PC-3 (cell line): ENCODE measurements at regions of chr2 and their contacts with region 1.

Region 1: GRCh38 chr2:68441179-68441993 is 25.7 kb downstream of the FBXO48 start:
- DNase-seq: peak; percentile 91
- ATAC-seq: peak; percentile 96
- H3K4me3 ChIP-seq: no peak overlapping the region
- H3K27ac ChIP-seq: no peak overlapping the region
- H3K4me1 ChIP-seq: no peaks in the 10 kb centered on the region
- H3K27me3 ChIP-seq: no peaks in the 10 kb centered on the region
- CTCF ChIP-seq: peak; percentile 95

Region 2: DNA sequence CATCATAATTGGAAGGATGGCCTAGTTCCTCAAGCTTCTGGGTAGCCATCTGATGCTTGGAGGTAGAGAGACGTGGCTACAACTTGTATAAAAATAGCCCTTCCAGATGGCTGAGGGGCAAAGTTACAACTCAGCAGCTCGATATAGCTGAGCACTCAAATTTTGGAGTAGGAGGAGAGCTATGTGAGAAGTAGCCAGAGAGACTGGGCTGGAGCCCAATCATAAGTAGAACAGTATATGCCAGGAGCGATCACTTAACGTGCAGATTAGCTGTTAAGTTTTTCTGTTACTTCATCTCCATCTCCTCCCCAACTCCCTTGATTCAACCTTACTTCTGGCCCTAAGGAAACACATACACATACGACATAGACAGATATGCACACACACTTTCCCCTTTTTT is 150.5 kb before region 1 on chr2:
- CTCF ChIA-PET with region 1: interaction called, 6 read pairs
- POLR2A ChIA-PET with region 1: no interaction called
- intact Hi-C with region 1: loop called (anchors 5 kb)
- DNase-seq: no peak
- ATAC-seq: no peak
- H3K4me3 ChIP-seq: no peak overlapping the region
- H3K27ac ChIP-seq: no peak overlapping the region
- H3K4me1 ChIP-seq: no peaks in the 10 kb centered on the region; the same call in 1 of the 2 replicates
- H3K27me3 ChIP-seq: no peaks in the 10 kb centered on the region
- CTCF ChIP-seq: no peak

Region 3: GRCh38 chr2:68319398-68320117 is 121.8 kb before region 1 on chr2 and contains the start of gene CNRIP1:
- CTCF ChIA-PET with region 1: interaction called, 11 read pairs
- POLR2A ChIA-PET with region 1: no interaction called
- intact Hi-C with region 1: no loop called
- DNase-seq: peak; percentile 16
- ATAC-seq: peak; percentile 71
- H3K4me3 ChIP-seq: peak within 1 kb of the TSS; percentile 86
- H3K27ac ChIP-seq: peak within 1 kb of the TSS; percentile 62
- H3K4me1 ChIP-seq: peaks cover 16% of the 10 kb centered on the region
- H3K27me3 ChIP-seq: no peaks in the 10 kb centered on the region
- CTCF ChIP-seq: no peak
- total RNA-seq, gene CNRIP1: 11.6 and 11.7 TPM in 2 replicates

Region 4: GRCh38 chr2:68423966-68424650 is 17.3 kb before region 1 on chr2:
- CTCF ChIA-PET with region 1: no interaction called
- POLR2A ChIA-PET with region 1: no interaction called
- intact Hi-C with region 1: no loop called
- DNase-seq: no peak
- ATAC-seq: no peak
- H3K4me3 ChIP-seq: no peak overlapping the region
- H3K27ac ChIP-seq: no peak overlapping the region
- H3K4me1 ChIP-seq: peaks cover 13% of the 10 kb centered on the region
- H3K27me3 ChIP-seq: no peaks in the 10 kb centered on the region
- CTCF ChIP-seq: no peak